ENCODE measurements at regions of chr12 and their contacts with region 1.

Region 1: DNA sequence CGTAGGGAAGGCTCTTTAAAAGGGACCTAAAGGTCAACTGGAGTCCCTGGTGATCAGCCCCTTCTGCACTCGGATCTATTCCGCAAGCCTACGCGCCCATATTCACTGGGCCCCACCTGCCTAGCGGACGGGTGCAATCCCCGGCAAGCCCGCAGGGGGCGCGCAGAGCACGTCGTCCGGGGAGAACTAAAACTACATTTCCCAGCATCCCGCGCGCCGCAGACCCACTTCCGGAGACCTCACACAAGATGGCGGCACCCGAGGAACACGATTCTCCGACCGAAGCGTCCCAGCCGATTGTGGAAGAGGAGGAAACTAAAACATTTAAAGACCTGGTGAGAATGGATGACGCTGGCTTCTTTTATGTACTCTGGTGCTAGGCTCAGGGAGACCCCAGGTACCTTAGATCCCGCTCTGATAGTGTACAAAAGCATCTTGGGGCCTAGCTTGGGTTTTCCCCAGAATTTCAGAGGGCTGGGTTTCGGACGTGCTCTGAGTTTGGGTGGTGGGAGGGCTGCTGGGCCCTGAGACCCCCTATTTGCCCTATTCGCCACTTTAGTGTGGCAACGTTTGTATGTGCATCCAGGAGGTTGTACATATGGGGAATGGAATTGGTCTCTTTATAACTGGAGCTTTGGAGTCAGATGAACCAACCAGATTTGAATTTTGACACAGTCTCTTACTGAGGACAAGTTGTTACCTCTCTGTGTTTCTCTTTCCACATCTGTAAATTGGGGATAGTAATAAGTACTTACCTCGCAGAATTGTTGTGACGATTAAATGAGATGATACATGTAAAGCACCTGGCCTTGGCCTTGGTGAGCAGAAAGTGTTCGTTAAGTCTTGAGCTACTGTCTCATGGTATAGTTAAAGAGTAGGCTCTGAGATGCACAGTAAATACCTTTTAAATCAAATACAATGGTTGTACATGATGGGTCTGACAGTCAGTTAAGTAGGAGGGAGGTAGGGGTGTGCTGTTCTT is at the start of gene DDX47:
- DNase-seq: peak; percentile 87 to 95
- ATAC-seq: peak; percentile 93 to 94
- H3K4me3 ChIP-seq: peak within 1 kb of the TSS; percentile 92
- H3K27ac ChIP-seq: peak within 1 kb of the TSS; percentile 90 to 92
- H3K4me1 ChIP-seq: peaks cover 43% of the 10 kb centered on the region
- CTCF ChIP-seq: peak; percentile 81
- EP300 ChIP-seq: no peak
- POLR2A ChIP-seq: peak; percentile 46
- RAD21 ChIP-seq: peak; percentile 60 to 72
- polyA plus RNA-seq, gene DDX47: 118 and 144 TPM in 2 replicates

Region 2: DNA sequence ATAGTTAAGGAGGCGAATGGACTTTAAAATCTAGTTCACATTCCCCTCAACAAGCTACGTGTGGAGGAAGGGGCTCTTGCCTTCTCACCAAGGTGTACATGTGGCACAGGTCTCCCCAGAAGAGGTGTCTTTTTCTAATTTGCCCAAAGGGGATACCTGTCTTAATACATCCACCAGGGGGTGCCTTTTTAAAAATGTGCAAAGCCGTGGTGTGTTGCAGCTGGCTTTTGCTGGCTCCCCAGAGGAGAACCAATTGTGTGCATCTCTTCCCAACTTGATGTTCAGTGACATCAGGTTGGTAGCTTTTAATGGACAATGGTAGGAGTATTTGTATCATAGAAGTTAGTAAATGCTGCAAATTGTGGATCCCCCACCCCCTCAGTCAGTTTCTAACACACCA is 167.9 kb before region 1 on chr12:
- CTCF ChIA-PET with region 1: no interaction called
- POLR2A ChIA-PET with region 1: no interaction called
- DNase-seq: peak in 1 of 2 experiments; percentile 44
- ATAC-seq: peak in 1 of 2 experiments; percentile 64; a peak in 3 of 6 replicates
- H3K4me3 ChIP-seq: no peak overlapping the region
- H3K27ac ChIP-seq: no peak overlapping the region
- H3K4me1 ChIP-seq: no peaks in the 10 kb centered on the region
- CTCF ChIP-seq: no peak; the same call in 1 of the 3 replicates
- EP300 ChIP-seq: no peak
- POLR2A ChIP-seq: no peak
- RAD21 ChIP-seq: peak in 1 of 2 experiments; percentile 26; a peak in 1 of 5 replicates

Region 3: GRCh38 chr12:12797794-12798152 is 15.6 kb before region 1 on chr12:
- CTCF ChIA-PET with region 1: interaction called, 39 read pairs
- POLR2A ChIA-PET with region 1: no interaction called
- DNase-seq: no peak
- ATAC-seq: no peak
- H3K4me3 ChIP-seq: no peak overlapping the region
- H3K27ac ChIP-seq: peak overlapping the region in 1 of 2 experiments; percentile 7; a peak in 2 of 6 replicates
- H3K4me1 ChIP-seq: peaks cover 18% of the 10 kb centered on the region
- CTCF ChIP-seq: no peak
- EP300 ChIP-seq: no peak
- POLR2A ChIP-seq: no peak
- RAD21 ChIP-seq: no peak

Region 4: GRCh38 chr12:12803186-12803585 is 10.2 kb before region 1 on chr12:
- CTCF ChIA-PET with region 1: interaction called, 39 read pairs
- POLR2A ChIA-PET with region 1: interaction called, 5 read pairs
- DNase-seq: peak; percentile 98 to 100
- ATAC-seq: peak; percentile 91 to 96
- H3K4me3 ChIP-seq: no peak overlapping the region
- H3K27ac ChIP-seq: peak overlapping the region; percentile 89 to 90
- H3K4me1 ChIP-seq: peaks cover 66% of the 10 kb centered on the region
- CTCF ChIP-seq: no peak
- EP300 ChIP-seq: peak; percentile 20 to 50; a peak in 2 of 5 replicates
- POLR2A ChIP-seq: peak; percentile 37; the same call in 1 of the 2 replicates
- RAD21 ChIP-seq: no peak

Region 5: GRCh38 chr12:12890815-12891645 is 77.6 kb after region 1 on chr12 and contains the start of gene GPRC5A:
- CTCF ChIA-PET with region 1: interaction called, 54 read pairs
- POLR2A ChIA-PET with region 1: interaction called, 18 read pairs
- DNase-seq: peak; percentile 90 to 99
- ATAC-seq: peak; percentile 87 to 89
- H3K4me3 ChIP-seq: peak within 1 kb of the TSS; percentile 54
- H3K27ac ChIP-seq: peak within 1 kb of the TSS; percentile 94
- H3K4me1 ChIP-seq: peaks cover 47% of the 10 kb centered on the region
- CTCF ChIP-seq: peak; percentile 40
- EP300 ChIP-seq: peak; percentile 61 to 79; a peak in 3 of 5 replicates
- POLR2A ChIP-seq: peak; percentile 99
- RAD21 ChIP-seq: peak; percentile 63 to 64
- polyA plus RNA-seq, gene GPRC5A: 296 and 321 TPM in 2 replicates

Region 6: DNA sequence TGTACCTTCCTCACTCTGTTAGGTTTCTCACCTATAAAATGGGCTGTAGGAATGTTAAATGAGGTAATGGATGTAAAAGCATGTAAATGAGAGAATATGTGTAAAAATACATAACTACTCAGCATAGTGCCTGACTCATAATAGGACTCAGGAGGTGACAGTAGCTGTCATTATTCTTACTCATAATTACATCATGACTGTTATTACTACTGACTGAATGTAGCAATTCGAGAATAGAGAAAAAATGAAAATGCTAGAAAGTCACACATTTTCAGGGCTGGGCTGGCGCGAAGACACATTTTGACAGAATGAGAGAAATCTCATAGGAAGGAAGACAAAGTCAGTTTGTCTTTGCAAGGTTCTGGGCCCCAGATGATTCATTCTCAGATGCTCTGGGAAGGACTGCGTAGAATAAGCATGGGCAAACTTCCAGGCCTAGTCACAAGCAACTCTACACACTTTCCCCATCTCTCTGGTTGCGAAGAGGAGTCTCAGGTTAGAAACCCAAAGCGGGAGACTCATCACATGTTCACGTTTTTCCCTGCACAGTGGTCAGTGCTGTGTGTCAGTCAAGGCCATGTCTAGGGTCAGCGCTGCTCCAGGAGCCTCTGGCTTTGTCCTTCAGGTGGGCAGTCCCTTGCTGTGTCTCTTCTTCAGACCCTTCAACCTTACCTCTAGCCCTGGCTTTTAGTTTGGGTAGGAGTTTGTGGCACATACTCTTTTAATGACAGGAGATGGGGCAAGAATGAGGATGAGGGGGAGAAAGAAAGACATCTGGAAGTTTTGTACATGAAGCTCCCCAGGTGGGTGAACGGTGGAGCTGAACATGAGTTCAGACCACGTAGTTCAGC is 86.3 kb after region 1 on chr12:
- CTCF ChIA-PET with region 1: interaction called, 46 read pairs
- POLR2A ChIA-PET with region 1: interaction called, 6 read pairs
- DNase-seq: peak in 1 of 2 experiments; percentile 76
- ATAC-seq: peak; percentile 33 to 64
- H3K4me3 ChIP-seq: 0 out of 3 replicates have a peak overlapping the region, but pooled peaks have one; percentile 0
- H3K27ac ChIP-seq: peak overlapping the region; percentile 84 to 85
- H3K4me1 ChIP-seq: peaks cover 98% of the 10 kb centered on the region
- CTCF ChIP-seq: no peak
- EP300 ChIP-seq: no peak
- POLR2A ChIP-seq: no peak
- RAD21 ChIP-seq: no peak

Region 7: DNA sequence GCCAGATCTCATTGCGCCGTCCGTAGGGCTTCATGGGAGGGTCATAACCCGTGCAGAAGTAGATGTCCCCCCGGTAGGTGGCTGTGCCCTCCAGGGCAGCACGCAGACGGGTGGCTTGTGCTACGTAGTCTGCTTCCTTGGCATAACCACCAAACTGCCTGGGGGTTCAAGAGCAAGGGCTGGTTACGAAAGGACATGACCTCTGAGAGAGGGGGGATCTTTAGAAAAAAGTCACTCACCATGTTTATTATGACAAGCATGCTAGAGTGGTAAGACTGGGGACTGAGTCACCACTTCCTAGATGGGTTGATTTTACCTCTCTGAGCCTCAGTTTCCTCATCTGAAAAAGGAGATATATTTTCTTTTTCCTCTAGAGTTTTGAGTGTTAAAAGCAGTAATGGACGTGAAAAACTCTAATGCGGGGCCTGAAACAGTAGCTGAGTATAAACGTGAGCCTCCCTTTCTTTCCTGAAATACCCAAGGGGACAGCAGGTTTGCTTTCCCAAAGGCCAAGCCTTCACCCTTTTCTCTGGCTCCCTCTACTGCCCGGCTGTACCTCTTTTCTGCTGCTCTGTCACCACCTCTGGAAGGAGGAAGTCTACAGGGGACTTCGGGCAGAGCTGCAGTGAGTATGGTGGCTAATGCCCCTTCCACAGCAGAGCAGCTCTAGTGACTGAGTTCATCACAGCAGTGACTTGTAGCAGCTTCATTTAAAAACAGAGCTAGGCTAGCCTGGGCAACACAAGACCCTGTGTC is 162.1 kb after region 1 on chr12:
- CTCF ChIA-PET with region 1: interaction called, 51 read pairs
- POLR2A ChIA-PET with region 1: no interaction called
- DNase-seq: peak; percentile 61 to 64
- ATAC-seq: peak; percentile 36 to 71; a peak in 3 of 6 replicates
- H3K4me3 ChIP-seq: no peak overlapping the region
- H3K27ac ChIP-seq: peak overlapping the region; percentile 63 to 71
- H3K4me1 ChIP-seq: peaks cover 48% of the 10 kb centered on the region
- CTCF ChIP-seq: peak; percentile 42
- EP300 ChIP-seq: no peak
- POLR2A ChIP-seq: no peak
- RAD21 ChIP-seq: peak; percentile 49 to 80; a peak in 4 of 5 replicates

Region 8: GRCh38 chr12:12983420-12984035 is 170.1 kb after region 1 on chr12:
- CTCF ChIA-PET with region 1: interaction called, 51 read pairs
- POLR2A ChIA-PET with region 1: interaction called, 4 read pairs
- DNase-seq: peak; percentile 61 to 73
- ATAC-seq: peak; percentile 65 to 66; a peak in 5 of 6 replicates
- H3K4me3 ChIP-seq: no peak overlapping the region
- H3K27ac ChIP-seq: no peak overlapping the region
- H3K4me1 ChIP-seq: peaks cover 30% of the 10 kb centered on the region
- CTCF ChIP-seq: peak; percentile 86
- EP300 ChIP-seq: no peak
- POLR2A ChIP-seq: no peak
- RAD21 ChIP-seq: peak; percentile 84 to 91

Measured in A549 (cell line).